Ovary (tissue), 10 donors: ENCODE measurements at regions of chr3 and their contacts with region 1.

Region 1: GRCh38 chr3:119300991-119301391 is 6.8 kb downstream of the ARHGAP31 start:
- DNase-seq: no peak
- H3K4me3 ChIP-seq: no peak overlapping the region
- H3K27ac ChIP-seq: no peak overlapping the region
- H3K4me1 ChIP-seq: peaks cover 8% of the 10 kb centered on the region
- H3K27me3 ChIP-seq: no peaks in the 10 kb centered on the region
- CTCF ChIP-seq: no peak
- EP300 ChIP-seq: no peak
- POLR2A ChIP-seq: no peak

Region 2: DNA sequence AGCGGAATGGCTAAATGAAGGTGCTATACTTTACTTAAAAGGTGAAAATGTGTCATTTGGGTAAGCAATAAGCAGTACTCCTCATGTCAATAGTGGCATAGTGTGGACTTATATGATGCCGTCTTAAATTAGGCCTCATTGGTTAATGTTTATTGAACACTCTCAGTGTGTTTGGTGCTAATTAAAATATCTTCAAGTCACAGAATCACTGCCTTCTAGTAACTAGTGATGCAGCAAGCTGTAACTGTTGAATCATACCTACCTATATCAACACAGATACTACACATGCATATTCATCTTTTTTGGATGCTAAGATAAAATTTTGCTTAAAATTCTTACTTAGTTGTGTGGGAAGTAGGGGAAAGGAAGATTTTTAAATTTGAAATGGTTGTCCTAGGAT is 23.9 kb after region 1 on chr3:
- intact Hi-C with region 1: loop called in 1 of 4 experiments (anchors 2 kb)
- DNase-seq: no peak
- H3K4me3 ChIP-seq: no peak overlapping the region
- H3K27ac ChIP-seq: no peak overlapping the region
- H3K4me1 ChIP-seq: peaks cover 9% of the 10 kb centered on the region
- H3K27me3 ChIP-seq: no peaks in the 10 kb centered on the region
- CTCF ChIP-seq: no peak
- EP300 ChIP-seq: no peak
- POLR2A ChIP-seq: no peak